WTC11 (cell line): ENCODE measurements at regions of chr15 and their contacts with region 1.

Region 1: DNA sequence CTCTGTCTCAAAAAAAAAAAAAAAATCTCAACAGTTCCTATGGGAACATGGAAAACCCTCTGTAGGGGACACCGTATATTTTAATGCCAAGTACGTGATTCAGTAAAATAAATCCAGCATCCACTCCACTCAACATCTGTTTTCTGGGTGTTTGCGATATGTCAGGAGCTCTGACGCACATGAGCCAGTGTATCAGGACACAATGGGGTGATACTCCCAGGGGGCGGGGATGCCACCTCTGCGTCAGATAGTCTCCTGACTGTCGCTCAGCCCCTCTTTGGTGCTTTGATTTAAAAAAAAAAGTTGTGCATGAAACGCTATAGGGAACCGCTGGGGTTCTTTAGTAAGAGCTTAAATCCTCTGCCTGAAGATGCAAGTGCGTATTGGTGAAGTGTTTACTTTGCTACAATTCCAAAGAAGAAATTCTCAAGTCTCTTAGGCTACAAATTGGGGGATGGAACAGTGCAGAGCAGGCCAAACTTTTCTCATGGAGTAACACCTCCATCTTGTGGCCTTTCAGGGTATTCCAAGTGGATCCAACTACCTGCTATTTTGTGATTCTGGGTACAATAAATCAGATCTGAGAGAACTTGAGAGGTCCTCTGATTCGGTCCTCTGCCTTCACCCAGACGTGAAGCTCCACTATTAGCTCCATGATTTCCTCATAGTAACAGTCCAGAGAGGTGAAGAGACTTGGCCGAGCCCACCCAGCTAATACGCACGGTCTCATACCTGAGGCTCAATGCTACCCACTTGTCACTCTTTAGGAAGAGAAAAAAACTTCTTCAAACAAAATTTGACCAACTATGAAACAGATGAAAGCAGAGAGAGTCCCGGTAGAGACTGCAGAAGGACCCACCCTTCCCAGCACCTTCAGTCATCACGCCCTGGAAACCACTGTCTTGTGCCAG is 9.3 kb upstream of the NR2E3 start:
- DNase-seq: peak; percentile 46
- ATAC-seq: peak; percentile 72
- H3K4me3 Mint-ChIP-seq: no peak overlapping the region
- H3K27ac Mint-ChIP-seq: no peak overlapping the region; the same call in 1 of the 2 replicates
- H3K4me1 Mint-ChIP-seq: peaks cover 25% of the 10 kb centered on the region
- H3K27me3 Mint-ChIP-seq: peaks cover 2% of the 10 kb centered on the region; the same call in 1 of the 2 replicates
- CTCF ChIP-seq: peak; percentile 82

Region 2: GRCh38 chr15:71732636-71733035 is 68.5 kb before region 1 on chr15:
- CTCF ChIA-PET with region 1: no interaction called
- POLR2A ChIA-PET with region 1: no interaction called
- DNase-seq: no peak
- ATAC-seq: no peak
- H3K4me3 Mint-ChIP-seq: no peak overlapping the region
- H3K27ac Mint-ChIP-seq: no peak overlapping the region
- H3K4me1 Mint-ChIP-seq: no peaks in the 10 kb centered on the region
- H3K27me3 Mint-ChIP-seq: no peaks in the 10 kb centered on the region
- CTCF ChIP-seq: no peak

Region 3: DNA sequence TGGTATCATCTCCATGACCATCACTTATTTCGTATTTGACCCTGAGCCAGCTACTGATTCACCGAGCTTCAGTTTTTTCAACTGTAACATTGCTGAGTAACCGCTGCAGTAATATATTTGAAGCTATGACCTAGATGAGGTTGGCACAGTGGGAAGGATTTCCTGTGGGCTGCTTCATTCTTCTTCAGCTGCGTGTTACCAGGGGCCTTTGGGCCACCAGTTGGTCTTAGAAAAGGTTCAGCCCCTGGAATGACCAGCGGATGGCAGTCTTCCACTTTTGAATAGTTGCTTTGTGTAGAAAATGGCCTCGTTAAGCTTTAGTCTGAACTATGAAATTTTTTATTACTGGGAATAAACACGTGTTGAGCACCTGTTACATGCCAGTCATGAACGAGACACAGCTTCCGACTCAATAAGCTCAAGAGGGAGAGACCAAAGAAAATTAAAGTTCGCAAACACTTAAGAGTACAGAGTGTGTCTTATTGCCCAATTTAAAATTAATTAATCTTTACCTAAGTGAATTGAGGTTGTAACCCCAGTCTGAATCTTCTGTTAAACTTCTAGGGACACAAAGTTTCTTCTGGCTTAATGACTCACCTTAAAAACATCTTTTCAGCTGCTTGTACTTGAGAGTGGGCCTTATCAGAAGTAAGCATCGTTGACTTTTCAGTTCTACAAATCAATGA is 48.3 kb before region 1 on chr15:
- CTCF ChIA-PET with region 1: interaction called, 43 read pairs
- POLR2A ChIA-PET with region 1: no interaction called
- DNase-seq: peak; percentile 42
- ATAC-seq: peak; percentile 56; the same call in 1 of the 2 replicates
- H3K4me3 Mint-ChIP-seq: no peak overlapping the region
- H3K27ac Mint-ChIP-seq: no peak overlapping the region
- H3K4me1 Mint-ChIP-seq: no peaks in the 10 kb centered on the region
- H3K27me3 Mint-ChIP-seq: no peaks in the 10 kb centered on the region
- CTCF ChIP-seq: peak; percentile 16; the same call in 1 of the 2 replicates

Region 4: DNA sequence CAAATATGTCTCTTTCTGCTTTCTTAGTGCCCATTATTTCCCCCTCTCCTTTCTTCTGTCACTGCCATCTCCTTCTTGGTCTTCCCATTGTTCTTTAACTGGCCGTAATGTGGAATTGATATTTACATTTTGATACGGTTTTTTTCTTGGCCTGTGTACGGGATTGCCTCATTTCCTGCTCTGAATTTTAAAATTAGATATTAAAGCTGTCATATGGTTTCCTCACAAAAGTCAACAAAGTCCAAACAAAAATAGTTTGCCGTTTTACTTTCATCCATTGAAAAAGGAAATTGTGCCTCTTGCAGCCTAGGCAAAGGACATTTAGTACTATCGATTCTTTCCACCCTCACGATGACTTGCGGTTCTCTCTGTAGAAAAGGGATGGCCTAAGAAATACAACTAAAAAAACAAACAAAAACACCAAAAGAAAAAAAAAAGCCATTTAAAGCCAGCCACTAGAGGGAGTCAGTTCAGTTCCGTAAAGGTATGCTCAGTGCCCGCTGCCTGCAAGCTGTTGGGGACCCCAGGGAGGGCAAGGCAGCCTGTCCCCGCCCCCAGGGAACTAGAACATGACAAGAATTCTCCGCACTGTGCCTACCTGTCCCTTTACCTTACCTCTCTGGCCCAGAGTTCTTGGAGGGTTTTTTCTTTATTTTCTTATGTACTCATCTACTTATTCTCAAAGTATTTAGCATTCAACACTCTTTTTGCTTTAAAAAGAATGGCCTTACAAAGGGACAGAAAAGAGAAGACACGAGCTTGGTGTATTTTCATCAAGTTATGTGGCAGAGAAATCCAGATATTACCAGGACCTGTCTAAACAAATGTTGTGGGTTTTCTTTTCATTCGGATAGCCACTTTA is 20.7 kb before region 1 on chr15:
- CTCF ChIA-PET with region 1: interaction called, 14 read pairs
- POLR2A ChIA-PET with region 1: no interaction called
- DNase-seq: peak; percentile 81
- ATAC-seq: peak; percentile 95
- H3K4me3 Mint-ChIP-seq: no peak overlapping the region
- H3K27ac Mint-ChIP-seq: peak overlapping the region; percentile 63
- H3K4me1 Mint-ChIP-seq: peaks cover 9% of the 10 kb centered on the region
- H3K27me3 Mint-ChIP-seq: no peaks in the 10 kb centered on the region
- CTCF ChIP-seq: peak; percentile 75

Region 5: DNA sequence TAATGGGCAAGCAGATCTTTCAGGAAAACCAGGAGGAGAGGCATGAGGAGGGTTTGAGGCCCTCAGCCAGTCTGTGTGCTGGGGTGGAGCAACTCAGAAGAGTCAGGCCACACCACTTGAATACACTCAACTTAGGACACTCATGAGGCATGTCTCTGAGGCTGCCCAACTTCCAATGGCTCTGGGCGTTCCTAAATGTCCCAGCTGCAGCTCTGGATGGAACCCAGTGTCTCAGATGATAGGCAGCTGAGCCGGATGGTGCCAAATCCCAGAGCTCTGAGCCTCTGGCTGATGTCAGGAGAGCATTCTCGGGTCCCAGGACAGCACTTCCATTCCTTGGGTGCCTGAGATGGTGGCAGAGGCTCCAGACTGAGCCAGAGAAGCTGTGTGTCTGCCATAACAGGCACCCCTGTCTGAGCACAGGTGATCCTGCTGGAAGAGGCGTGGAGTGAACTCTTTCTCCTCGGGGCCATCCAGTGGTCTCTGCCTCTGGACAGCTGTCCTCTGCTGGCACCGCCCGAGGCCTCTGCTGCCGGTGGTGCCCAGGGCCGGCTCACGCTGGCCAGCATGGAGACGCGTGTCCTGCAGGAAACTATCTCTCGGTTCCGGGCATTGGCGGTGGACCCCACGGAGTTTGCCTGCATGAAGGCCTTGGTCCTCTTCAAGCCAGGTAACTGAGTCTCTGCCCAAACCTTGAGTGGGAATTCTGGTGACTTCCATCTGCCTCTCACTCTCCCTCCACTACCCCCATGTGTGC is 12.1 kb after region 1 on chr15:
- CTCF ChIA-PET with region 1: no interaction called
- POLR2A ChIA-PET with region 1: no interaction called
- DNase-seq: no peak
- ATAC-seq: no peak
- H3K4me3 Mint-ChIP-seq: no peak overlapping the region
- H3K27ac Mint-ChIP-seq: no peak overlapping the region
- H3K4me1 Mint-ChIP-seq: peaks cover 10% of the 10 kb centered on the region
- H3K27me3 Mint-ChIP-seq: no peaks in the 10 kb centered on the region; the same call in 1 of the 2 replicates
- CTCF ChIP-seq: no peak

Region 6: DNA sequence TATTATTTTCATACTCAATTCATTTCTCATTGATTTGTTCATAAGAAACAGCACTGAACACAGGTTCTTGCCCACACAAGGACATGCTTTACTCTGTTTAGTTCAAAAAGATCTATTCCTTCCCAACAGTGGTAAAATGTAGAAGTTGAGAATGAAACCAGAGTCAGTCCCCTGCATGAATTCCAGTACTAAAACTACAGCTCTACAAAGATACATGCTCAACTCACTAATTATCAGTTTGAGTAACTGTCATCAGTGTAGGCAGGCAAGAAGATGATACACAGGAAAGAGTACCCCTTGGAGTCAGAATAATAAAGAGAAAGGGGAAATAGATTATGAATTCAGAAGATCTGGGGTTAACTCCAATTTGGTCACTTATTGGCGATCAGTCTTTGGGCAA is 52.5 kb after region 1 on chr15:
- CTCF ChIA-PET with region 1: interaction called, 16 read pairs
- POLR2A ChIA-PET with region 1: no interaction called
- DNase-seq: no peak
- ATAC-seq: no peak
- H3K4me3 Mint-ChIP-seq: no peak overlapping the region
- H3K27ac Mint-ChIP-seq: no peak overlapping the region
- H3K4me1 Mint-ChIP-seq: no peaks in the 10 kb centered on the region
- H3K27me3 Mint-ChIP-seq: no peaks in the 10 kb centered on the region
- CTCF ChIP-seq: no peak

Region 7: GRCh38 chr15:72098040-72098439 is 296.9 kb after region 1 on chr15:
- CTCF ChIA-PET with region 1: no interaction called
- POLR2A ChIA-PET with region 1: no interaction called
- DNase-seq: no peak
- ATAC-seq: no peak
- H3K4me3 Mint-ChIP-seq: no peak overlapping the region
- H3K27ac Mint-ChIP-seq: no peak overlapping the region
- H3K4me1 Mint-ChIP-seq: no peaks in the 10 kb centered on the region
- H3K27me3 Mint-ChIP-seq: no peaks in the 10 kb centered on the region
- CTCF ChIP-seq: no peak

Region 8: GRCh38 chr15:72155635-72156616 is 354.8 kb after region 1 on chr15:
- CTCF ChIA-PET with region 1: interaction called, 30 read pairs
- POLR2A ChIA-PET with region 1: no interaction called
- DNase-seq: peak; percentile 91
- ATAC-seq: peak; percentile 94
- H3K4me3 Mint-ChIP-seq: peak overlapping the region; percentile 27
- H3K27ac Mint-ChIP-seq: no peak overlapping the region
- H3K4me1 Mint-ChIP-seq: peaks cover 9% of the 10 kb centered on the region
- H3K27me3 Mint-ChIP-seq: no peaks in the 10 kb centered on the region; the same call in 1 of the 2 replicates
- CTCF ChIP-seq: peak; percentile 84